Left cardiac atrium (tissue), 4 donors: ENCODE measurements at regions of chr6 and their contacts with region 1.

Region 1: DNA sequence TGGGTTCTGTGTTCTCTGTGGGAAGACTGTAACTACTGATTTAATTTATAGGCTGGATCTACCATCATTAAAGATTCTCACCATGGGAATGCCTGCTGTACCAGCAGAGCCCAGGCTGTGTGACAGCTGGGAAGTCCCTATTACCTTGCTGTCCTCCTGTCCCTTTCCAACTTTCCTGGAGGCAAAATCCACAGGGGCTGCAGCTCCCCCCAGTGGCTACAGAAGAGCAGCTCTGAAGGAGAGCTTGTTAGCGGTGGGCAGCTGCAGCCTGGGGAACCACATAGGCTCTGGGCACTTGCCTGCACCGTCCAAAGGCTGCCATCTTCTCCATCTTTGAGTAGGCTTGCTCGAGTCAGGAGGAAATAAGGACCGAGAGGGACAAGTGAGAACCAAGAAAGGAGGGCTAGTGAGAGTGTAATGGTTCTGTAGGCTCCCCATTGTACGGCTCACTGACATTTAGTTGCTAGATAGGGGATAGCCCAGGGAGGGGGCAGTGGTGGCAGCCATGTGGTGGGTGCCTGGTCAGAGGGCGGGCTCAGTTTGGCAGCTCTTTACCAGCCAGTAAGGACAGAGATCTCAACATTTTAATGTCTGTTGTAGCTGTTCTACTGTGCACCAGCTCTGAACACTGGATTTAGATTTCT is 155.1 kb upstream of the MLIP start:
- DNase-seq: peak; percentile 75
- ATAC-seq: peak; percentile 91 to 96

Region 2: DNA sequence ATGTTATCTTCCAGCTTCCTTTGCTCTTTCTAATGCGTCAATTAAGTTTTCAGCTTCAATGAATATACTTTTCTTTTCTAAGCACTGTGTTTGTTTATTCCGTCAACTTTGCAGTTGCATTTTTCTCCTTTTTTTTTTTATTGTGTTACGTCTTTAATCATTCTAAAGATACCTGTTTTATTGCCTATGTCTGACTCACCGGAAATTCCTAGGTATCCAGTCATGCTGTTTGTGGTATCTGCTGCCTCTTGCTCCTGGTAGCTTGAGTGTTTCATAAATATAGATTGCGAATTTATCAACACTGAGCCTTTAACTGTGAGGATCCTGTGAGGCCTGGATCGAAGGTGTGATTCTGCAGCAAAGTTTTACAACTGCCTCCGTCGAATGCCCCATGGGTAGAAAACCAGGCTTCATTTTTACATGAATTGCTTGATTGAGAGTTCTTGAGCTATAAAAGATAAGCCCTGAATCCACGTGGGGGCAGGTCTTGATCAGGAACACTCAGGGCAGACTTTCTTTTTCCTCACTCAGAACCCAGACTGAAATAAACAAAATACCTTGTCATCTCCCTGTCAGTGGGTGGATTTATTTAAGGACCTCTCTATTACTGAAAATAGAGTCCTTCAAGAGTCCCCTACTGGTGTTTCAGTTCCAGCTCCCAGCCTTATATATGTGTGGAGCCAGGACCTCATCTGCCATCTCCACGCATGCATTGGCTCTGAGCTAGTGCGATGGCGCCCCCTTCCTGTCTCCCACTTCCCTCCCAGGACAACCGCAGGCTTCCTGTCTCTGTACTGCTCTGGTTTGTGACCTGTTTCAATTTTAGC is 221.5 kb before region 1 on chr6:
- intact Hi-C with region 1: loop called in 1 of 2 experiments (anchors 5 kb)
- DNase-seq: peak; percentile 24
- ATAC-seq: peak; percentile 63 to 85

Region 3: GRCh38 chr6:53794720-53795253 is 161.4 kb before region 1 on chr6 and contains the start of gene LRRC1:
- intact Hi-C with region 1: loop called in 1 of 2 experiments (anchors 5 kb)
- DNase-seq: peak; percentile 94
- ATAC-seq: peak; percentile 93
- total RNA-seq, gene LRRC1: 3.8 to 4.9 TPM

Region 4: DNA sequence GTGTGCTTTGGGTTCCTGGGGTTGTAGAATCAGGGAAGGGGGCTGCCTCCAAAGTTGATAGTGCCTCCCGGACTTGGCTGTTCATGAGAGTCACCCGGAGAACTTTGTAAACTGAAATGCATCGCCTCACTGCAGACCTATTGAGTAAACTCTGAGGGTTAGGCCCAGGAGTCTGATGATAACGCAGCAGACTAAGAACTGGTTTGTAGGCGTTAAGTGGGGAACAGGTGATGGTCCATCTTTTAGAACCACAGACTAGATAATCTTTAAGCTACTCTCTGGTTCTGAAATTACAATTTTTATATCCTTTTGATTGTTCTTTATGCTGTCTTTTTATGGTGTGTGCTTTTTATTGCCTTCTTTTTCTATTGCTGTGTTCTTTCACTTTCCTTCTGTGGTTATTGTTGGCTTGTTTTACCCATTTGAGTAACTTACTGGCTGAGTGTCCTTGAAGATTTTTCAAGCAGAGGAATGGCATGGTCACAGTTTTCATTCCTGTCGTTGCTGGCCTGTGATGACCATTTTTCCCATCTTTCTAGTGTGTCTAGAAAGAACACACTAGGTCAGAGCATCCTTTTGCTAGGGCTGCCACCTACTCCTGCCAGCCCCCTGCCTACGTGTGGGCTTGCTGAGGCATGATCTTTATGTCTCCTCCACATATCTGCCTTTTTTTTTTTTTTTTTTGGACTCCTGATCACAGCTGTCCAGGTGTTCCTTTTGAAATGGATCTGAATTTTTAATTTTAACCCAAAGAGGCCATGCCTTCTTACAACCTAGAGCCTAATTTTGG is 130.5 kb before region 1 on chr6:
- intact Hi-C with region 1: no loop called
- DNase-seq: no peak
- ATAC-seq: peak in 1 of 2 donors; percentile 61